AG04449 (cell line): ENCODE measurements at regions of chr3 and their contacts with region 1.

Region 1: DNA sequence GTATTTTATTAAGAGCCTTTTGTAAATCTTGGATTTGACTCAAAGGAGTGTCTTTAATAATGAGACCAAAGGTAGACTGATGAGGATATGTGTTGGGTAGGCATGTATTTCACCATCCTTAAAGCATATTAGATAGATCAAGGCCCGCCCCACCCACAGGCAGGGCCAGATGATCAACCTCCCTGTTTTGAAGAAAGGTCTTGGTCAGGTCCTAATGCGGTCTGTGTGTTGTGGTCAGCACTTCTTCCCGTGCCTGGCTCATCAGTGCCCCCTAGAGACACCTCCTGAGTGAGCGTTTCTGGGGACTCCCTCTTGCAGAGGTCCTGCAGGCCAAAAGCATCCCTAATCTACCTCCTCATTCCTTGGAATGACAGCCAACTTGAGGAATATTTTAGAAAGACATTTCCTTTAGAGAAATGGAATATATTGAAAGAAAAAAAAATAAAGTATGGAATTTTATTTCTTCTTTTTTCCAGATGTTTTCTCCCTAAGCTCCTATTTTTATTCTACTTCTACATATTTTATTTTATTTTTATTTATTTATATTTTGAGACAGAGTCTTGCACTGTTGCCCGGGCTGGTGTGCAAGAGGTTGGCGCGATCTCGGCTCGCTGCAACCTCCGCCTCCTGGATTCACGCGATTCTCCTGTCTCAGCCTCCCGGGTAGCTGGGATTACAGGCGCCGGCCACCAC is 6.0 kb downstream of the TM4SF4 start:
- DNase-seq: peak; percentile 37
- H3K4me3 ChIP-seq: no peak overlapping the region
- CTCF ChIP-seq: peak; percentile 94

Region 2: DNA sequence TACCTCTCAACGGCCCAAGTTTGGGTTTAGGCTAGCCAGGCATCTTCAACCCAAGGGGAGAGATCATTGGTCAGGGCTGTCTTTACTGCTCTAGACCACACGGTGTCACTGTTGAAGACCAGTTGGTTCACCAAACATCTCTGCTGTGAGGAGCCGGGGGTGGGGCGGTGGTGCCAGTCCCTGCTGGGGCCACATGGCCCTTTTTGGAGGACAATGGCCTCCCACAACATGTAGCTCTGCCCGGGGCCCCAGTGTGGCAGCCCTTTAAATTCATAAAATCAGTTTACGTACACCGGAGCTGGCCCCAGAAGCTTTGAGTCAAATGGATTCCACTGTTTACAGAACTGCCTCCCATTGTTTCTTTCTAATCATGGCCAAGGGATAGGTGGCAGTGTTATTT is 127.9 kb before region 1 on chr3:
- CTCF ChIA-PET with region 1: interaction called, 46 read pairs
- POLR2A ChIA-PET with region 1: no interaction called
- DNase-seq: no peak
- H3K4me3 ChIP-seq: no peak overlapping the region
- CTCF ChIP-seq: peak; percentile 73

Region 3: DNA sequence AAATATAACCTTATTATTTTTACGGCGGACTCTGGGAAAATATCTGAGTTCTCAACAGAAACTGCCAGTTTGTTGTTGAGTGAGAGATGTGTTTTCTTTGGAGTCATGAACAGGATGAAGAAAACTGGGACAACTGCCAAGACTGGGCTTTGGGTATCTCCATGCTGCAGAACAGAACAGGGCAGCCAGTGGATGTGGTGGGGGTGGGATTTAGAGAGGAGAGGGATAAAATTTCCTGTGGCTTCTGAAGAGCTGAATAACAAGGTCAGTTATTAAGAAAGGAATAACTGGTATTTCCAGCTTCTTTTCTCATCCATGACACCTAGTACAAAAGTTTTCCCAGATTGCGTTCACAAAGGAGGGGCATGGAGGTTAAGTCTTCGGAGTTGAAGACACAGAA is 84.7 kb before region 1 on chr3:
- CTCF ChIA-PET with region 1: interaction called, 12 read pairs
- POLR2A ChIA-PET with region 1: no interaction called
- DNase-seq: no peak
- H3K4me3 ChIP-seq: no peak overlapping the region
- CTCF ChIP-seq: no peak

Region 4: GRCh38 chr3:149466192-149466591 is 14.3 kb before region 1 on chr3:
- CTCF ChIA-PET with region 1: interaction called, 54 read pairs
- POLR2A ChIA-PET with region 1: no interaction called
- DNase-seq: peak; percentile 59
- H3K4me3 ChIP-seq: no peak overlapping the region
- CTCF ChIP-seq: no peak